Activated CD4-positive, alpha-beta memory T cell treated with anti-CD3 and anti-CD28 coated beads for 36 hours (primary cell): ENCODE measurements at regions of chr6 and their contacts with region 1.

Region 1: DNA sequence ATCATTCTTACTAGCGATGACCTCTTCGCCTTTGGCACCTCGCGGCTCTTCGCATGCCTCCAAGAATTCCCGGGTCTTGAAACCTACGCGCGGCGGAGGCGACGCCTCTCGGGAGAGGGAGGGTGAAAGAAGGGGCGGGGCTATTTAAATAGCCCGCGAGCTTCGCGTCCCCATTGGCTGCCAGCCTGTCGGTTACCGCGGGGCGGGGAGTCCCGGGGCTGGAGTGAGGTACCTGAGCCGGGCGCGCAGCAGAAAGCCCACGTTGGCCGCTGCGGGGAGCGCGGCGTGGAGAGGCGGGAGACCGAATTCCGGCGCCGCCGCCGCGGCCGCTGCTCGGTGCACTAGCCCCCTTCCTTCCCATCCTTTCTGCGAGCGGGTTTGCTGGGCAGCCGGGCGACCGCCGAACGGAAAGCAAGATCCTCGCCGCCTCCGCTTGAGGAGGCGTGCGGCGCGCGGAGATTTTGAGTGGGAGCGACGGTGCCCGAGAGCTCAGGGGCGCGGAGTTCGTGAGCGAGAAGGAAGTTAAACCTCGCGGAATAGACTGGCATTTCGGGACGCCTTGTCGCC is at the start of gene BMP6:
- DNase-seq: peak; percentile 75
- H3K4me3 Mint-ChIP-seq: peak within 1 kb of the TSS; percentile 66
- H3K27ac Mint-ChIP-seq: no peak within 1 kb of the TSS
- H3K4me1 Mint-ChIP-seq: peaks cover 14% of the 10 kb centered on the region
- H3K27me3 Mint-ChIP-seq: peaks cover 73% of the 10 kb centered on the region
- total RNA-seq, gene BMP6: 0.40 to 0.46 TPM

Region 2: DNA sequence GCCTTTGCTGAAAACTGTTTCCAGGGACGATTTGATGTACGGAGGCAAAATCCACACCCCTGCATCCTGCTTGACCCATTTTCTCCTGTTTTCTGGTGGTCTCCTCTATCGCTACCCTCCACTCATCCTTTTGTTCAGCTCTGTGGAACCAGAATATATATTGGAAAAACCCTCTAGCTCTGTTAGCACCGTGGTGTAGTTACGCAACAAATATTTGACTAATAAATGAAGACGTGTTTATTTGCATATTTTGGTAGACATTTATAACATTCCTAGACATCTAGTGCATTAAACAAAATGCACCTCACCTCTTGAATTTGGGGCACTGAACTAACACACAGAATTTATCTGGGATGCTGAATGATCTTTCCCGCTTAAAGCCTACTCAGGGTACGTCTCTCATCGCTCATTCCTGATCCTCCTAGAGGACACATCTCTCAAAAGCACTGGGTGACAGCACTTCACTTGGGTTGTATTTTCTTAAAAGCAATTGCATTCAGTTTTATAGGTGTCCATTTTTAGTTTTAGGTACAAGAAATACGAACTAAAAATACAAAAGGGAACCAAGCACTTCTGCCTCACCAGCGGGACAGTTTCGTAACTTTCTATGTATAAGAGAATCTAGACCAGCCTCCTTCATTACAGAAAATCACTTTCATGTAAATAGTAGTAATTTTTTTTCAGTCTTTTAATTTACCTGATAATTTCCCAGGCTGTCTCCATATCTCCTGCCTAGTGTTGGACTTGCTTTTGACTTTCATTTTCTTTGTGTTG is 76.7 kb before region 1 on chr6:
- CTCF ChIA-PET with region 1: no interaction called
- POLR2A ChIA-PET with region 1: no interaction called
- intact Hi-C with region 1: no loop called
- DNase-seq: no peak
- H3K4me3 Mint-ChIP-seq: no peak overlapping the region
- H3K27ac Mint-ChIP-seq: no peak overlapping the region
- H3K4me1 Mint-ChIP-seq: peaks cover 7% of the 10 kb centered on the region
- H3K27me3 Mint-ChIP-seq: no peaks in the 10 kb centered on the region

Region 3: DNA sequence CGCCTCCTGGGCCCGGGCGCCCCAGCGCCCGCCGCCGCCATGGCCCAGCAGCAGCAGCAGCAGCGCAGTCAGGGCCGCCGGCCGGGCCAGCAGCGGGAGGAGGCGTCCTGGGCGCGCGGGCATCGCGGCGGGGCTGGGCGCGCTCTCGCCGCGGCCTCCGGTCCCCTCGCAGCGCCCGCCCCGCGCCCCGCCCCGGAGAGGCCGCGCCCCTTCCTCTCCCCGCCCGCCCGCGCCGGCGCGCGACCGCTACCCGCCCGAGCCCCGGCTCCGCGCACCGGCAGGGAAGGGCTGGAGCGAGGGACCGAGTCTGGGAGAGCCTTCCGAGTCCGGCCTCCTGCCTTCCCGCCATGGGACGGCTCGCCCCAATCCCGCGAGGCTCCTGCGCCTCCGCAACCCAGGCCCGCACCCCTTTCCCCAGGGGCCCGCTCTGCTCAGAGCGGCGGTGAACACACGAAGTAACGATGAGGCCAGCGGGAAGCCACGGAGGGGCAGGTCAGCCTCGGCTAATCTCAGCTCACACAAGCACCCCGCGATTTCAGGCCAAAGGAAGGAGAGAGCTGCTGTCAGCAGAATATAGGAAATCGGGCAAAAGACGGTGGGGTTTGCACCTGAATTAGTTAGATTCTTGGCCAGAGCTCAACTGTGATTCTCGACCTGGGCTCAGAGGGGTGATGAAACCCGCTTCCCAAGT is 184.9 kb after region 1 on chr6 and contains the start of gene TXNDC5:
- CTCF ChIA-PET with region 1: no interaction called
- POLR2A ChIA-PET with region 1: no interaction called
- intact Hi-C with region 1: loop called (anchors 5 kb)
- DNase-seq: peak; percentile 77
- H3K4me3 Mint-ChIP-seq: peak within 1 kb of the TSS; percentile 77
- H3K27ac Mint-ChIP-seq: no peak within 1 kb of the TSS
- H3K4me1 Mint-ChIP-seq: peaks cover 18% of the 10 kb centered on the region
- H3K27me3 Mint-ChIP-seq: peaks cover 1% of the 10 kb centered on the region
- total RNA-seq, gene TXNDC5: 59.6 to 64.5 TPM

Region 4: DNA sequence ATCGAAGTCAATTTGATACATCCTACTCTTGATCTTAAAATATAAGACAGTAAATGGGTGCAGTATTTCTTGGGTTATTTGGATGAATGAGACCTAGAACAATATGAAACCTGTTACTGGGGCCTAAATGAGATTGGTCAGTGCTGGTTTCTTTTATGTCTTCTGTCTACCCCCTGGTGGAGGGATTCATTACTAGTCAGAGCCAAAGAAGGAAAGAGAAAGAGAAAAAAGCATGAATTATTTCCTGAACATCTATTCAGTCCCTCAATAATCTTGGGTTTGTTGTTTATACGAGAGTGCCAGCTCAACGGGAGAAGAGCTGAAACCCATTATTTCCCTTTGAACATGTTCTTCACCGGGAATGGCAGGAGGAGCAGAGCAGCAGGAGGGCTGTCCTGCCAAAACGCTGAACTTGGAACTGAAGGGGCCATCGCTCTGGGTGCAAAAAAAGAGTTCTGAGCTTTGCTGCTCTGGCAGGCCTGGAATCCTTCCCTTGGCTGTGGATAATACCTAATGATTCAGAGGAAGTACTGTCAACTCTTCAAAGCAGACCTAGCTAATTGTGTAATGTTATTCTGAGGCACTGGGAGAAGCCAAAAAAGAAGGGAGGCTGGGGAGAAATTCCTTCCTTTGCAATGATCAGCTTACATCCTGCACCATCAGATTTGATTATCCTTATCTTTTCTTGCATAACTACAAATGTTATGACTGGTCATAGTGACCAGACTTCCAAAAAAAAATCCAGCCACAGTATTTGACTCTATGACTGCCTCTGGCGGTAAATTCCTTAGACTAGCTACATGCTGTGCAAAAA is 266.3 kb after region 1 on chr6:
- CTCF ChIA-PET with region 1: interaction called, 3 read pairs
- POLR2A ChIA-PET with region 1: no interaction called
- intact Hi-C with region 1: loop called (anchors 5 kb)
- DNase-seq: no peak
- H3K4me3 Mint-ChIP-seq: no peak overlapping the region
- H3K27ac Mint-ChIP-seq: no peak overlapping the region
- H3K4me1 Mint-ChIP-seq: no peaks in the 10 kb centered on the region
- H3K27me3 Mint-ChIP-seq: no peaks in the 10 kb centered on the region

Region 5: GRCh38 chr6:8006208-8006607 is 280.3 kb after region 1 on chr6:
- CTCF ChIA-PET with region 1: interaction called, 10 read pairs
- POLR2A ChIA-PET with region 1: no interaction called
- intact Hi-C with region 1: loop called (anchors 2 kb)
- DNase-seq: no peak
- H3K4me3 Mint-ChIP-seq: no peak overlapping the region
- H3K27ac Mint-ChIP-seq: no peak overlapping the region
- H3K4me1 Mint-ChIP-seq: peaks cover 4% of the 10 kb centered on the region
- H3K27me3 Mint-ChIP-seq: no peaks in the 10 kb centered on the region

Region 6: GRCh38 chr6:8219352-8219943 is 493.5 kb after region 1 on chr6:
- CTCF ChIA-PET with region 1: interaction called, 27 read pairs
- POLR2A ChIA-PET with region 1: no interaction called
- intact Hi-C with region 1: loop called (anchors 1 kb)
- DNase-seq: peak; percentile 40
- H3K4me3 Mint-ChIP-seq: no peak overlapping the region
- H3K27ac Mint-ChIP-seq: no peak overlapping the region
- H3K4me1 Mint-ChIP-seq: no peaks in the 10 kb centered on the region
- H3K27me3 Mint-ChIP-seq: peaks cover 7% of the 10 kb centered on the region